CD4-positive, alpha-beta T cell (primary cell): ENCODE measurements at regions of chr19 and their contacts with region 1.

Region 1: DNA sequence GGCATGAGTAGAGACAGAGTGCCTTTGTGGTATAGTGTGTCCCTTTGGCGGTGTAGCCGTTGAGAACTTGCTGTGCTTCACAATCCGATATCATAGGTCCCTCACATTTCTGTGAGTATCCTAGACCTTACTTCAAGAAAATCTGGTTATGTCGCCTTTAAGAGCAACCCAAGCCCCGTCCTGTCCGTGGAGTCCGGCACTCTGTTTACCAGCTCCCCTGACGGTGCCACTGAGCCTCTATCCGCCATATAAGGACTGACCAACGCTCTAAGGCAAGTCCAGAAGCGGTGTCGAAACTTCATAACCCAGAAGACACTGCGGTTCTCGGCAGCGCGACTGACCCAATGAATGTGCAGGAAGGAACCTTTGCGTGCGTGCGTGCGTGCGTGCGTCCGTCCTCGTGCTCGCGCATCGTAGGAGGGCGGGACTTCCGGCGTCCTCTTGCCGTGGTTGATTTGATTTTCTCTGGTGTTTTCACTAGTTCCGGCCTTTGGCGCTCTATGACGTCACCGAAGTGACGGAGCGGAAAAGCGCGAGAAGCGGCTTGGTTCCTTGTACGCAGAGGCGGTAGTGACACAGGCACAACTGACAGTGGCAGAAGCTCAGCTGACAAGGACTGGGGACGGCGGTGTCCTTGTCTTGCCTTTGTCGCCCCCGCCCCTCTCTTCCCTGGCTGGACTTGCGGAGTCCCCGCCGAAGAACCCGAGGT is at the starts of genes TRAPPC2B and ZNF547:
- DNase-seq: peak; percentile 96 to 99 (median 98)
- ATAC-seq: peak; percentile 90
- H3K4me3 ChIP-seq: peak within 1 kb of the TSS; percentile 69
- H3K4me3 Mint-ChIP-seq: peak within 1 kb of the TSS; percentile 94
- H3K27ac ChIP-seq: peak within 1 kb of the TSS; percentile 86 to 89
- H3K27ac Mint-ChIP-seq: peak within 1 kb of the TSS; percentile 94
- H3K4me1 ChIP-seq: peaks cover 15% of the 10 kb centered on the region
- H3K4me1 Mint-ChIP-seq: peaks cover 19% of the 10 kb centered on the region
- H3K27me3 ChIP-seq: no peaks in the 10 kb centered on the region
- H3K27me3 Mint-ChIP-seq: peaks cover 3% of the 10 kb centered on the region
- CTCF ChIP-seq: no peak
- total RNA-seq, gene TRAPPC2B: 11.5 to 12.7 TPM
- total RNA-seq, gene ZNF547: 1.4 to 2.1 TPM

Region 2: DNA sequence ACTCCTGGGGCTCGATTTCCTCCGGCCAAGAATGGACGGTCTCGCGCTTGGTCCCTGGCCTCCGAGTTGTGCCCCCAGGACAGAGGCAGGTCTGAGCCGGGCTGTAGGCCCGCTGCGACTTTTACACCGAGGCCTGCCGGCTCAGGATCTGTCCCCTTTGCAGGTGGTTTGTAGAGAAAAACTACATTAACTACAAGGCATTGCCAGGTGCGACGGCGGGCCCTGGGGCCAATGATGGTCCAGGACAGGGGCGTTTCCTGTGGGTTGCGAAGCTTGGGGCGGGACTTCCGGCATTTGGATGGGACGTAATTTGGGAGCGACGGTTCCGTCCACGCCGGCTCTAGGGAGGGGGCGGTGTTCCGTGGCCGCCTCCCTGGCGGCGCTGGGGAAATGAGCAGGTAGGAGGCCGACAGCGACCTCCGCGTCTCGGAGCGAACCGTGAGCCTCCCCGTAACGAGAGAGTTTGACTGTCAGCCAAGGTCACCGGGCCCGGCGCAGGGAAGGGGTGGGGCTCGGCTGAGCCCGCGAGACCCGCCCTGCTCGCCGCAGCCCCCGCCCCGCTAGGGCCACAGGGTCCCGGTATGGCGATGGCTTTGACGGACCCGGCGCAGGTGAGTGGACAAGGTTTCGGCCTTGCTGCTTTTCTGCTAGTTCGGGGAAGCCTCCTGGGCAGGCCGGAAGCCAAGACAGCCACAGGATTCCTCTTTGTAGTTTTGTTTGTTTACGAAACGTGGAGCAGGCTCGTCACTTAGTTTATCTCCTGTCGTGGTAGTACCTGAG is 122.7 kb before region 1 on chr19 and contains the start of gene ZNF805:
- CTCF ChIA-PET with region 1: no interaction called
- POLR2A ChIA-PET with region 1: interaction called, 3 read pairs
- intact Hi-C with region 1: loop called (anchors 1 kb)
- DNase-seq: peak; percentile 94 to 98 (median 96)
- ATAC-seq: peak; percentile 88
- H3K4me3 ChIP-seq: peak within 1 kb of the TSS; percentile 89
- H3K4me3 Mint-ChIP-seq: peak within 1 kb of the TSS; percentile 93
- H3K27ac ChIP-seq: peak within 1 kb of the TSS; percentile 89 to 96
- H3K27ac Mint-ChIP-seq: peak within 1 kb of the TSS; percentile 92
- H3K4me1 ChIP-seq: peaks cover 32% of the 10 kb centered on the region
- H3K4me1 Mint-ChIP-seq: peaks cover 40% of the 10 kb centered on the region
- H3K27me3 ChIP-seq: no peaks in the 10 kb centered on the region
- H3K27me3 Mint-ChIP-seq: no peaks in the 10 kb centered on the region
- CTCF ChIP-seq: no peak
- total RNA-seq, gene ZNF805: 33.1 to 33.7 TPM

Region 3: GRCh38 chr19:57279418-57280066 is 83.6 kb before region 1 on chr19:
- CTCF ChIA-PET with region 1: no interaction called
- POLR2A ChIA-PET with region 1: no interaction called
- intact Hi-C with region 1: loop called (anchors 1 to 2 kb)
- DNase-seq: peak; percentile 59 to 93 (median 70)
- ATAC-seq: peak; percentile 66
- H3K4me3 ChIP-seq: peak overlapping the region; percentile 76
- H3K4me3 Mint-ChIP-seq: no peak overlapping the region
- H3K27ac ChIP-seq: peak overlapping the region; percentile 95 to 100
- H3K27ac Mint-ChIP-seq: no peak overlapping the region
- H3K4me1 ChIP-seq: peaks cover 42% of the 10 kb centered on the region
- H3K4me1 Mint-ChIP-seq: peaks cover 27% of the 10 kb centered on the region
- H3K27me3 ChIP-seq: no peaks in the 10 kb centered on the region
- H3K27me3 Mint-ChIP-seq: no peaks in the 10 kb centered on the region
- CTCF ChIP-seq: no peak

Region 4: DNA sequence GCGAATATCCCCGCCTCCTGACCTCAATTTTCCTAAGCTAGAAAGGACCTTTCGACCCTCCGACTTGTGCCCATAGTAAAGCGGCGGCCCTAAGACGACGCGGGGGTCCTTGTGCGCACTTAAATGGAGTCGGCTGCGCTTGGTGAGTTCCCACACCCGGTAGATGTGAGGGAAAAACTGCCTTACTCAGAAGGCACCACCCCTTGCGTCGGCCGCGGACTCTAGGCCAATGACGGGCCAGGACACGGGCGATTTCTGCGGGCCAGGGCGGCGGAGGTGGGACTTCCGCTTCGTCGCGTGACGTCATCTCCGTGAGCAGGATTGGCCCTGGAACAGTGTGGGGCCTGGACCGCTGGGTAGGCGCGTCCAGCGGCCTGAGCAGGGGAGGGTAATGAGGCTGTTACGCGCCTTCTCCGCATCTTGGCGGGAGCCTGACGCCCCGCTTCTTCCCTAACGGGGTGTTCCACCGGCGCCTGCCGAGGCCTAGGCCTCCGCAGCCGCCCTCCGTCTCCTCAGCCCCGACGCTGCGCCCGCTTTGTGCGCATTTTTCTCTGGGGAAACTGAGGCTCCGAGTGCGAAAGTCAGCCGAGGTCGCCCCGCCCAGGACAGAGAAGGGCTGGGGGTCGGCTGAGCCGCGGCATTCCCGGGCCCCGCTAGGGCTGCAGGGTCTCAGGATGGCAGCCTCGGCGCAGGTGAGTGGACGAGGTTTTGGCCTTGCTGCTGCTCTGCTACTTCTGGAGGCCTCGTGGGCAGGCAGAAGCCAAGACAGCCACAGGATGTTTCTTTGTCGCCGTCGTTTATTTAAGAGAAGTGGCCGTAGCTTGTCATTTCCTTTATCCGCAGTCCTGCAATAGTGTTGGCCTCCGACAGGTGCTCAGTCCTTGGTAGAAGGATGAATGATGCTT is 42.7 kb before region 1 on chr19 and contains the start of gene ZNF543:
- CTCF ChIA-PET with region 1: no interaction called
- POLR2A ChIA-PET with region 1: no interaction called
- intact Hi-C with region 1: loop called (anchors 1 to 5 kb)
- DNase-seq: peak; percentile 81 to 96 (median 89)
- ATAC-seq: peak; percentile 95
- H3K4me3 ChIP-seq: peak within 1 kb of the TSS; percentile 83
- H3K4me3 Mint-ChIP-seq: peak within 1 kb of the TSS; percentile 95
- H3K27ac ChIP-seq: peak within 1 kb of the TSS; percentile 68 to 74
- H3K27ac Mint-ChIP-seq: peak within 1 kb of the TSS; percentile 96
- H3K4me1 ChIP-seq: peaks cover 23% of the 10 kb centered on the region
- H3K4me1 Mint-ChIP-seq: peaks cover 33% of the 10 kb centered on the region
- H3K27me3 ChIP-seq: peaks cover 12 to 14% of the 10 kb centered on the region in 2 experiments
- H3K27me3 Mint-ChIP-seq: peaks cover 29% of the 10 kb centered on the region
- CTCF ChIP-seq: no peak
- total RNA-seq, gene ZNF543: 4.0 to 4.3 TPM

Region 5: GRCh38 chr19:57350877-57351805 is 12.0 kb before region 1 on chr19 and contains the start of gene ZNF304:
- CTCF ChIA-PET with region 1: no interaction called
- POLR2A ChIA-PET with region 1: interaction called, 20 read pairs
- intact Hi-C with region 1: no loop called
- DNase-seq: peak; percentile 63 to 93 (median 76)
- ATAC-seq: peak; percentile 99
- H3K4me3 ChIP-seq: peak within 1 kb of the TSS; percentile 97
- H3K4me3 Mint-ChIP-seq: peak within 1 kb of the TSS; percentile 93
- H3K27ac ChIP-seq: peak within 1 kb of the TSS in 1 of 2 donors; percentile 80
- H3K27ac Mint-ChIP-seq: peak within 1 kb of the TSS; percentile 90
- H3K4me1 ChIP-seq: peaks cover 18% of the 10 kb centered on the region
- H3K4me1 Mint-ChIP-seq: peaks cover 35% of the 10 kb centered on the region
- H3K27me3 ChIP-seq: no peaks in the 10 kb centered on the region
- H3K27me3 Mint-ChIP-seq: peaks cover 9% of the 10 kb centered on the region
- CTCF ChIP-seq: no peak
- total RNA-seq, gene ZNF304: 4.9 to 5.4 TPM

Region 6: GRCh38 chr19:57389730-57390598 is 26.8 kb after region 1 on chr19 and contains the start of gene ZNF548:
- CTCF ChIA-PET with region 1: no interaction called
- POLR2A ChIA-PET with region 1: interaction called, 12 read pairs
- intact Hi-C with region 1: loop called (anchors 1 to 2 kb)
- DNase-seq: peak; percentile 87 to 99 (median 95)
- ATAC-seq: peak; percentile 96
- H3K4me3 ChIP-seq: peak within 1 kb of the TSS; percentile 86
- H3K4me3 Mint-ChIP-seq: peak within 1 kb of the TSS; percentile 98
- H3K27ac ChIP-seq: peak within 1 kb of the TSS; percentile 86 to 95
- H3K27ac Mint-ChIP-seq: peak within 1 kb of the TSS; percentile 95
- H3K4me1 ChIP-seq: peaks cover 18% of the 10 kb centered on the region
- H3K4me1 Mint-ChIP-seq: peaks cover 33% of the 10 kb centered on the region
- H3K27me3 ChIP-seq: no peaks in the 10 kb centered on the region
- H3K27me3 Mint-ChIP-seq: no peaks in the 10 kb centered on the region
- CTCF ChIP-seq: no peak
- total RNA-seq, gene ZNF548: 68.3 to 70.4 TPM